Endothelial cell of umbilical vein (primary cell): ENCODE measurements at regions of chr2 and their contacts with region 1.

Region 1: GRCh38 chr2:45778720-45779171 is 127.3 kb downstream of the PRKCE start:
- DNase-seq: peak; percentile 55
- H3K4me3 ChIP-seq: no peak overlapping the region
- H3K27ac ChIP-seq: no peak overlapping the region
- H3K4me1 ChIP-seq: no peaks in the 10 kb centered on the region
- H3K27me3 ChIP-seq: peaks cover 0 to 2% of the 10 kb centered on the region in 2 experiments
- CTCF ChIP-seq: peak; percentile 52 to 64
- POLR2A ChIP-seq: no peak

Region 2: GRCh38 chr2:45585267-45585861 is 193.4 kb before region 1 on chr2:
- CTCF ChIA-PET with region 1: interaction called, 21 read pairs
- POLR2A ChIA-PET with region 1: no interaction called
- dilution Hi-C with region 1: no loop called
- intact Hi-C with region 1: loop called (anchors 5 kb)
- DNase-seq: peak; percentile 74
- H3K4me3 ChIP-seq: no peak overlapping the region
- H3K27ac ChIP-seq: no peak overlapping the region
- H3K4me1 ChIP-seq: peaks cover 3% of the 10 kb centered on the region
- H3K27me3 ChIP-seq: no peaks in the 10 kb centered on the region
- CTCF ChIP-seq: peak; percentile 58 to 59
- POLR2A ChIP-seq: no peak

Region 3: DNA sequence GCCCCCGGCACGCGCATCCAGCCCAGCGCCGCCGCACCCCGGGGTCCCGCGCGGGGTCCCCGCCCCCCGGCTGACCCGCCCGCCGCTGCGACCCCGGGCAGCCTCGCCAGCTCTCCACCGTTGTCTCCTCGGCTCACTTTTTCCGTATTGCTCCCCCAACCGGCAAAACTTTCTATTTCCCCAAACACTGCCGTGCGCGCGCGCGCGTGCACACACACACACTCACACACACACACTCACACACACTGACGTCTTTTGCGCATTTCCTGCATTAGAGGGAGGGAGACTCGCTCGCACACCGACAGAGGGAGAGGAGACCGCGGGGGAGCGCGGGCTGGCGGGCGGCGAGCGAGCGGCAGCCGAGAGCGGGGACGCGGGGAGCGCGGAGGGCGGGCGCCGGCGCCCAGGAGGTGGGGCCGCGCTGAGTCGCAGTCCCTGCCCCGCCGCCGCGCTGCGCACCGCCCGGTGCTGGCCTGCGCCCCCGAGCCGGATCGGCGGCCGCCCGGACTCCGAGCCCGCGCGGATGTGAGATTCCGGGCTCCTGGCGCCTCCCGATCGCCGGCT is 127.8 kb before region 1 on chr2:
- CTCF ChIA-PET with region 1: interaction called, 66 read pairs
- POLR2A ChIA-PET with region 1: no interaction called
- dilution Hi-C with region 1: no loop called
- intact Hi-C with region 1: loop called (anchors 1 kb)
- DNase-seq: peak; percentile 96
- H3K4me3 ChIP-seq: peak overlapping the region; percentile 81 to 98 (median 88)
- H3K27ac ChIP-seq: peak overlapping the region; percentile 76
- H3K4me1 ChIP-seq: peaks cover 16% of the 10 kb centered on the region
- H3K27me3 ChIP-seq: no peaks in the 10 kb centered on the region
- CTCF ChIP-seq: peak; percentile 35 to 49
- POLR2A ChIP-seq: peak; percentile 86

Region 4: GRCh38 chr2:45759310-45759851 is 19.4 kb before region 1 on chr2:
- CTCF ChIA-PET with region 1: interaction called, 12 read pairs
- POLR2A ChIA-PET with region 1: no interaction called
- dilution Hi-C with region 1: no loop called
- intact Hi-C with region 1: no loop called
- DNase-seq: no peak
- H3K4me3 ChIP-seq: no peak overlapping the region
- H3K27ac ChIP-seq: no peak overlapping the region
- H3K4me1 ChIP-seq: no peaks in the 10 kb centered on the region
- H3K27me3 ChIP-seq: no peaks in the 10 kb centered on the region
- CTCF ChIP-seq: no peak
- POLR2A ChIP-seq: no peak

Region 5: GRCh38 chr2:45813003-45813941 is 34.5 kb after region 1 on chr2:
- CTCF ChIA-PET with region 1: interaction called, 11 read pairs
- POLR2A ChIA-PET with region 1: no interaction called
- dilution Hi-C with region 1: no loop called
- intact Hi-C with region 1: loop called (anchors 1 kb)
- DNase-seq: peak; percentile 98
- H3K4me3 ChIP-seq: no peak overlapping the region
- H3K27ac ChIP-seq: peak overlapping the region; percentile 92
- H3K4me1 ChIP-seq: peaks cover 39% of the 10 kb centered on the region
- H3K27me3 ChIP-seq: no peaks in the 10 kb centered on the region
- CTCF ChIP-seq: no peak
- POLR2A ChIP-seq: no peak

Region 6: GRCh38 chr2:45935791-45936622 is 157.3 kb after region 1 on chr2:
- CTCF ChIA-PET with region 1: interaction called, 49 read pairs
- POLR2A ChIA-PET with region 1: no interaction called
- dilution Hi-C with region 1: no loop called
- intact Hi-C with region 1: loop called (anchors 1 kb)
- DNase-seq: peak; percentile 90
- H3K4me3 ChIP-seq: no peak overlapping the region
- H3K27ac ChIP-seq: peak overlapping the region; percentile 51
- H3K4me1 ChIP-seq: peaks cover 20% of the 10 kb centered on the region
- H3K27me3 ChIP-seq: no peaks in the 10 kb centered on the region
- CTCF ChIP-seq: peak; percentile 73 to 76
- POLR2A ChIP-seq: no peak